MCF 10A (cell line): ENCODE measurements at regions of chr13 and their contacts with region 1.

Region 1: DNA sequence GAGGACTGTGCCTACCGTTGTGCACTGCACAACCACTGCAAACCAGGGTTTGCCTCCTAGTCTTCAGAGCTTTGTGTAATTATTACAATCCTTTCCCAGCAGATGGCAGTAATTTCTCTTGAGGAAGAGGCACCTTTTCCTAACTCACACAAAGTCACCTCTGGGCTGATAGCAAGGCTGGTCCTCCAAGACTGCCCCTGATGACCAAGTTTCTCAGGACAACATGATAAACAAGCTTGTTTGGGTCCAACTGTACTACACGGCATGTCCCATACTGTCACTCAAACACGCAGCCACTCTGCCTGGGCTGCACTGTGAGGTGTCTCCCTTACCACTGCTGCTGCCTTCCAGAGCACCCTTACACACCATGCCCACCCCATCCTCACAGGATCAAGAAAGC is 39.3 kb downstream of the RFXAP start:
- DNase-seq: peak; percentile 70
- H3K4me3 Mint-ChIP-seq: no peak overlapping the region
- H3K27ac Mint-ChIP-seq: no peak overlapping the region
- H3K4me1 Mint-ChIP-seq: no peaks in the 10 kb centered on the region
- H3K27me3 Mint-ChIP-seq: no peaks in the 10 kb centered on the region
- CTCF ChIP-seq: peak; percentile 39

Region 2: GRCh38 chr13:36453516-36453915 is 404.8 kb before region 1 on chr13:
- CTCF ChIA-PET with region 1: interaction called, 16 read pairs
- POLR2A ChIA-PET with region 1: no interaction called
- intact Hi-C with region 1: no loop called
- DNase-seq: peak; percentile 39
- H3K4me3 Mint-ChIP-seq: no peak overlapping the region
- H3K27ac Mint-ChIP-seq: no peak overlapping the region
- H3K4me1 Mint-ChIP-seq: no peaks in the 10 kb centered on the region
- H3K27me3 Mint-ChIP-seq: no peaks in the 10 kb centered on the region
- CTCF ChIP-seq: no peak

Region 3: DNA sequence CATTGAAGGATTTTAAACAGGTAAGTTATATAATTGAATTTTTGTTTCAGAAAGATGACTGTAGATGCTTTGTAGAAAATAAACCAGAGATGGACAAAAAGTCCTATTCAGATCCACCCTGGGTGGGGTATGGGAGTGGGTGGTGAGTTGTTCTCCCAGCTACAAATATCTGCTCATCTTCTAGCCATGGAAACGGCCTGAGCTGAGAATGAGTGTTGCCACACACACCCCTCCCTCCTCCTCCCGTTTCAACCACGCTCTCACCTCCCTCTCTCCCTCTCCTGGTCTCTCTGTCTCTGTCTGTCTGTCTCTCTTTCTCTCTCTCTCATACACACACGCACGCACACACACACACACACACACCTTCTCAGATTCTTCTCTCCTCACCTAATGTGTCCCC is 158.1 kb before region 1 on chr13:
- CTCF ChIA-PET with region 1: no interaction called
- POLR2A ChIA-PET with region 1: no interaction called
- intact Hi-C with region 1: no loop called
- DNase-seq: no peak
- H3K4me3 Mint-ChIP-seq: no peak overlapping the region
- H3K27ac Mint-ChIP-seq: no peak overlapping the region
- H3K4me1 Mint-ChIP-seq: peaks cover 6% of the 10 kb centered on the region
- H3K27me3 Mint-ChIP-seq: peaks cover 51% of the 10 kb centered on the region
- CTCF ChIP-seq: no peak

Region 4: DNA sequence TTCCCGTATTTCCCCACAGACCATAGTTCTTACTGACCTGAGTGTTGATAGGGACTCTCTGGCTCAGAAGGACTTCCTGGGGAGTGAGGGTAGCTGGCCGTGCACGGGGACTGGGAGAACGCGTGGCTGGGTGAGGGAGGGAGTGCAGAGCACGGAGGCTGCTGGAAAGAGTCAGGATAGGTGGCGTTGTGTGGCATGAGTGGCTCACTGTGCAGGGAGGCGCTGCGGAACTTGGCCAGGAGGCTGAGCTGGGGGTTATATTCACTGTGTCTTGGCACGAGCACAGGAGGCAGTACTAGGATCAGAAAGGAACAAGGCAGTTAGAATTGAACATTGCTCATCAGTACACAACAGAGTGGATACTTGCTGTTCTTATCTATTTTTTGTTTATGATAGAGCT is 14.3 kb after region 1 on chr13:
- CTCF ChIA-PET with region 1: interaction called, 20 read pairs
- POLR2A ChIA-PET with region 1: no interaction called
- intact Hi-C with region 1: no loop called
- DNase-seq: no peak
- H3K4me3 Mint-ChIP-seq: no peak overlapping the region
- H3K27ac Mint-ChIP-seq: no peak overlapping the region
- H3K4me1 Mint-ChIP-seq: peaks cover 7% of the 10 kb centered on the region
- H3K27me3 Mint-ChIP-seq: no peaks in the 10 kb centered on the region
- CTCF ChIP-seq: no peak

Region 5: DNA sequence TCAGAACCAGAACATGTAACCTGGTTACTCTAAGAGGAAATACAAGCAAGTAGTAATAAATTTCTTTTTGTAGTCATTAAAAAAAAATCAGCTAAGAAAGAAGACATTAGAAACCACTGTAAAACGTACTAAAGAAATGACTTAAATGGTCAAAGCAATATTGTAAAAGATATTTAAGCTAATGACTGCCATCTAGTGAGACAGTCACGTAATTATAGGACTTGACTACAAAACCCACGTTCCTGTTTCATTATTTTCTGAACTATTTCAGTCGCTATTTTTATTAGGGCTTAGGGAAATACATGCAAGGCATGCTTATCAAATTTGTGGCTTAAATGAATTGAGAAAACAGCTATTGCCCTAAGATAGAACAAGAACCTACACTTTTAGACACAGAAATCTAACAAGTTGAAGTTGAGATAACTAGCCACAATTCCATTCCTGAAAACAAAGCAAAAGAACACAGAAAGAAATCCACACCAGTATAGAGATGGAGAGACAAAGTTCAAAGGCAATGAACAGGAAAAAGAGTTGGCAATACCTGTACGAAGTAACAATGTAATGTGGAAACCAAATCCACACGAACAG is 123.0 kb after region 1 on chr13:
- CTCF ChIA-PET with region 1: interaction called, 141 read pairs
- POLR2A ChIA-PET with region 1: interaction called, 10 read pairs
- intact Hi-C with region 1: loop called (anchors 1 kb)
- DNase-seq: peak; percentile 48
- H3K4me3 Mint-ChIP-seq: no peak overlapping the region
- H3K27ac Mint-ChIP-seq: no peak overlapping the region
- H3K4me1 Mint-ChIP-seq: no peaks in the 10 kb centered on the region
- H3K27me3 Mint-ChIP-seq: no peaks in the 10 kb centered on the region
- CTCF ChIP-seq: peak; percentile 52

Region 6: GRCh38 chr13:37068962-37069361 is 210.7 kb after region 1 on chr13:
- CTCF ChIA-PET with region 1: no interaction called
- POLR2A ChIA-PET with region 1: no interaction called
- intact Hi-C with region 1: loop called (anchors 5 kb)
- DNase-seq: no peak
- H3K4me3 Mint-ChIP-seq: no peak overlapping the region
- H3K27ac Mint-ChIP-seq: no peak overlapping the region
- H3K4me1 Mint-ChIP-seq: no peaks in the 10 kb centered on the region
- H3K27me3 Mint-ChIP-seq: no peaks in the 10 kb centered on the region
- CTCF ChIP-seq: peak; percentile 31